ENCODE measurements at regions of chr12 and their contacts with region 1.

Region 1: GRCh38 chr12:47121146-47121545 is 41.4 kb upstream of the AMIGO2 start:
- DNase-seq: no peak
- H3K4me3 Mint-ChIP-seq: no peak overlapping the region
- H3K27ac Mint-ChIP-seq: peak overlapping the region; percentile 92
- H3K4me1 Mint-ChIP-seq: peaks cover 9% of the 10 kb centered on the region
- H3K27me3 Mint-ChIP-seq: no peaks in the 10 kb centered on the region

Region 2: DNA sequence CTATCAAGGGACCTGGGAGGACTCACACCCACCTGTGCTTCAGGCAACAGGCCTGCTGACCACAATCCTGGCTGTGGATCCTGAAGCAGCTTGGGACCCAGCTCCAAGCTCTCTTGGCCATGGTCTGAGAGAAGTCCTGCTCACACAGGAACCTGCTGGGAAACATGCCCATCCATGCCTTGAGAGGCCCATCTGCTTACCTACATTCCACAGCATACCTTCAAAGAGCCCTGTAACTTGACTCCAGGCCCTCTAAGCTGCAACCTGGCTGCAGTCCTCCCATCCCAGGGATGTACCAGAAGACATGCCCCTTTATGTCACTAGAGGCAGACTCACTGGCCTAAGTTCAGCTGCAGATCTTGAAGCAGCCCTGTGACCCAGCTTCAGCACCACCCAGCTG is 20.3 kb after region 1 on chr12:
- intact Hi-C with region 1: no loop called
- DNase-seq: no peak
- H3K4me3 Mint-ChIP-seq: no peak overlapping the region
- H3K27ac Mint-ChIP-seq: no peak overlapping the region
- H3K4me1 Mint-ChIP-seq: peaks cover 17% of the 10 kb centered on the region
- H3K27me3 Mint-ChIP-seq: no peaks in the 10 kb centered on the region

Region 3: GRCh38 chr12:47164724-47165439 is 43.7 kb after region 1 on chr12:
- intact Hi-C with region 1: loop called (anchors 5 kb)
- DNase-seq: no peak
- H3K4me3 Mint-ChIP-seq: no peak overlapping the region
- H3K27ac Mint-ChIP-seq: no peak overlapping the region
- H3K4me1 Mint-ChIP-seq: peaks cover 2% of the 10 kb centered on the region
- H3K27me3 Mint-ChIP-seq: no peaks in the 10 kb centered on the region

Region 4: DNA sequence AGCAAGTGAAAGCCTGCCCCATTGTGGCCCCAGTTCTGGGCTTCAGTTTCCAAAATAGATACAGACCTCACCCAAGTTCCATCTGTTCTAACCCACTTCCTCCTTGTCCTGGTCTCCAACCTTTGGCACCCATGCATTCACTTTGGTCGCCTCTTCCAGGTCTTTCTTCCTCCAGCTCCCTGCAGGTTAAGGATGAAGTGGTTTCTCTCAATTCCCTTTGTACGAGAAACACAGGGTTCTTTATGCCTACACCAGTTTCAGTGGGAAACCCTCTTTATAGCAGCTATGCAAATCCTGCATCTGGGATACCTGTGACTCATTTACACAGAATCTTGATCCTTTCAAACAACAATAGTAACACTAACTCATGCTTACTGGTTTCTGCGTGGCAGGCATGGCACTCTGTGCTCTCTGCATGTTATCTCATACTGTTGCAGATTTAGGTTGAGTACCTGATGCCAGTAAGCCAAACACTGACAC is 69.2 kb after region 1 on chr12:
- intact Hi-C with region 1: loop called (anchors 5 kb)
- DNase-seq: no peak
- H3K4me3 Mint-ChIP-seq: peak overlapping the region; percentile 66
- H3K27ac Mint-ChIP-seq: peak overlapping the region; percentile 81
- H3K4me1 Mint-ChIP-seq: peaks cover 63% of the 10 kb centered on the region
- H3K27me3 Mint-ChIP-seq: no peaks in the 10 kb centered on the region